ENCODE measurements at regions of chr12 and their contacts with region 1.

Region 1: GRCh38 chr12:118372541-118373495 is at the start of gene TAOK3:
- DNase-seq: peak; percentile 91
- ATAC-seq: peak; percentile 85
- H3K4me3 ChIP-seq: peak within 1 kb of the TSS; percentile 92
- H3K27ac ChIP-seq: peak within 1 kb of the TSS; percentile 76
- H3K4me1 ChIP-seq: peaks cover 3% of the 10 kb centered on the region; the same call in 1 of the 2 replicates
- H3K27me3 ChIP-seq: no peaks in the 10 kb centered on the region
- CTCF ChIP-seq: no peak
- EP300 ChIP-seq: no peak
- POLR2A ChIP-seq: peak; percentile 96
- RAD21 ChIP-seq: no peak
- polyA plus RNA-seq, gene TAOK3: 41.3 to 42.5 TPM

Region 2: DNA sequence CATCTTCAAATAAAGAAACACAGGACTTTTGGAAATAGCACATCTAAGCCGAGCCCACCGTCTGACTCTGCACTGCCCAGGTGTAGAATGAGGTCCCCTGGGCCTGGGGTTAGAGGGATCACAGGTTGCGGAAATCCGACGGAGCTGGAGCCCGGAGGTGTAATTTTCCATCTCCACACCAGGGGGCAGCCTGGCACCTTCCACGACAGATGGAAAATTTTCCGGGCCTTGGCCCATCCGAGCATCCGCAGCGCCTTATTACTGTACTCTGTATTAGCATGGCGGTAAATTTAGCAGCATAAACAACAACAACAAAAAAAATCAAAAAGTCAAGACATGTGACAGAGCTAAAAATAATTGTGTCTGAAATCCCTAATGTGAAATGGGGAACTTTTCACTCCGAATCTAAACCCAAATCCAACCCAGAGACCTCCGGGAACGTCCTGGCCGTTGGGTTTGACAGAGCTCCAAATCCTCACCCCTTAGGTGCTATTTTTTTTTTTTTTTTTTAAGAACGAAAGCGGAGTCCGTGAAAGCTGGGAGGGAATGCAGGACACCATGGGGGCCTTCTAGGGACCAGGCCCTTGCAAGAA is 497.9 kb before region 1 on chr12:
- CTCF ChIA-PET with region 1: interaction called, 18 read pairs
- POLR2A ChIA-PET with region 1: no interaction called
- RAD21 ChIA-PET with region 1: interaction called, 6 read pairs
- SMC1A ChIA-PET with region 1: interaction called, 7 read pairs
- in situ Hi-C with region 1: no loop called
- intact Hi-C with region 1: loop called (anchors 2 kb)
- DNase-seq: no peak
- ATAC-seq: peak; percentile 90
- H3K4me3 ChIP-seq: no peak overlapping the region
- H3K27ac ChIP-seq: no peak overlapping the region
- H3K4me1 ChIP-seq: no peaks in the 10 kb centered on the region
- H3K27me3 ChIP-seq: no peaks in the 10 kb centered on the region
- CTCF ChIP-seq: peak; percentile 85 to 89 (median 86)
- EP300 ChIP-seq: no peak
- POLR2A ChIP-seq: no peak
- RAD21 ChIP-seq: peak; percentile 89

Region 3: DNA sequence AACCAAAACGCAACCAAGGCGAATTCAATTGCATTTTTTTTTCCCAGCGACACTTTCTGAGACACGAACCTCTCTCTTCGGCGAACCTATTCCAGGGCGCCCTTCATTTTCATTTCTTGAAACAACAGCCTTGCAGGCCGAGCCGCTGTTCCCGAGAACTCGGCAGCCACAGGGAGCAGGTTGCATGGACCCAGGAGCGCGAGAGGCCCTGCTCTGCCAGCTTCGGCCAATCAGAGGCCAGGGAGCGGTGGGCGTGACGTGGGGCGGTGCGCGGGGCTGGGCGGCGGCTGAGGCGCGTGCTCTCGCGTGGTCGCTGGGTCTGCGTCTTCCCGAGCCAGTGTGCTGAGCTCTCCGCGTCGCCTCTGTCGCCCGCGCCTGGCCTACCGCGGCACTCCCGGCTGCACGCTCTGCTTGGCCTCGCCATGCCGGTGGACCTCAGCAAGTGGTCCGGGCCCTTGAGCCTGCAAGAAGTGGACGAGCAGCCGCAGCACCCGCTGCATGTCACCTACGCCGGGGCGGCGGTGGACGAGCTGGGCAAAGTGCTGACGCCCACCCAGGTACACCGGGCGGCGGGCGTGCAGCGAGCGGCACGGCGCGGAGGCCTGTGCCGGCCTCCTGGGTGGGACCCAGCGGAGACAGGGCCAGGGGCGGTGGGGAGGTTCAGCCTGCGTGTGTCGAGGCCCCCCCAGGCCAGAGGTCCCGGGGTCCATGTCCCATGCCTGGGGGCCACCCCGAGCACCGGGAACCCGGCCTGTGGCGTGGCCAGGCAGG is 236.8 kb before region 1 on chr12 and contains the start of gene PEBP1:
- CTCF ChIA-PET with region 1: interaction called, 28 read pairs
- POLR2A ChIA-PET with region 1: interaction called, 4 read pairs
- RAD21 ChIA-PET with region 1: interaction called, 32 read pairs
- SMC1A ChIA-PET with region 1: interaction called, 15 read pairs
- in situ Hi-C with region 1: no loop called
- intact Hi-C with region 1: no loop called
- DNase-seq: peak; percentile 77
- ATAC-seq: peak; percentile 98
- H3K4me3 ChIP-seq: peak within 1 kb of the TSS; percentile 86
- H3K27ac ChIP-seq: peak within 1 kb of the TSS; percentile 86
- H3K4me1 ChIP-seq: peaks cover 11% of the 10 kb centered on the region
- H3K27me3 ChIP-seq: no peaks in the 10 kb centered on the region
- CTCF ChIP-seq: no peak
- EP300 ChIP-seq: no peak
- POLR2A ChIP-seq: peak; percentile 97
- RAD21 ChIP-seq: no peak
- polyA plus RNA-seq, gene PEBP1: 79.4 to 150 TPM

Region 4: GRCh38 chr12:118187751-118188435 is 184.9 kb before region 1 on chr12:
- CTCF ChIA-PET with region 1: interaction called, 277 read pairs
- POLR2A ChIA-PET with region 1: interaction called, 23 read pairs
- RAD21 ChIA-PET with region 1: interaction called, 166 read pairs
- SMC1A ChIA-PET with region 1: interaction called, 185 read pairs
- in situ Hi-C with region 1: loop called (anchors 5 kb)
- intact Hi-C with region 1: no loop called
- DNase-seq: no peak
- ATAC-seq: no peak
- H3K4me3 ChIP-seq: no peak overlapping the region
- H3K27ac ChIP-seq: no peak overlapping the region
- H3K4me1 ChIP-seq: peaks cover 23% of the 10 kb centered on the region
- H3K27me3 ChIP-seq: no peaks in the 10 kb centered on the region
- CTCF ChIP-seq: no peak
- EP300 ChIP-seq: no peak
- POLR2A ChIP-seq: no peak
- RAD21 ChIP-seq: no peak

Region 5: GRCh38 chr12:118237052-118237665 is 135.7 kb before region 1 on chr12:
- CTCF ChIA-PET with region 1: interaction called, 17 read pairs
- POLR2A ChIA-PET with region 1: interaction called, 4 read pairs
- RAD21 ChIA-PET with region 1: interaction called, 15 read pairs
- SMC1A ChIA-PET with region 1: interaction called, 14 read pairs
- in situ Hi-C with region 1: no loop called
- intact Hi-C with region 1: loop called (anchors 5 kb)
- DNase-seq: peak; percentile 65
- ATAC-seq: peak; percentile 93
- H3K4me3 ChIP-seq: no peak overlapping the region
- H3K27ac ChIP-seq: peak overlapping the region; percentile 75
- H3K4me1 ChIP-seq: peaks cover 26% of the 10 kb centered on the region
- H3K27me3 ChIP-seq: no peaks in the 10 kb centered on the region
- CTCF ChIP-seq: no peak
- EP300 ChIP-seq: peak; percentile 27 to 76; a peak in 1 of 4 replicates
- POLR2A ChIP-seq: no peak
- RAD21 ChIP-seq: no peak

Region 6: GRCh38 chr12:118307069-118307954 is 65.5 kb before region 1 on chr12:
- CTCF ChIA-PET with region 1: interaction called, 24 read pairs
- POLR2A ChIA-PET with region 1: interaction called, 5 read pairs
- RAD21 ChIA-PET with region 1: interaction called, 23 read pairs
- SMC1A ChIA-PET with region 1: interaction called, 23 read pairs
- in situ Hi-C with region 1: no loop called
- intact Hi-C with region 1: loop called (anchors 2 kb)
- DNase-seq: peak; percentile 69
- ATAC-seq: peak; percentile 78
- H3K4me3 ChIP-seq: peak overlapping the region; percentile 64
- H3K27ac ChIP-seq: peak overlapping the region; percentile 98
- H3K4me1 ChIP-seq: peaks cover 38% of the 10 kb centered on the region
- H3K27me3 ChIP-seq: no peaks in the 10 kb centered on the region
- CTCF ChIP-seq: no peak
- EP300 ChIP-seq: no peak; a peak in 1 of 4 replicates
- POLR2A ChIP-seq: no peak
- RAD21 ChIP-seq: no peak

Region 7: GRCh38 chr12:118357257-118358007 is 15.4 kb before region 1 on chr12:
- CTCF ChIA-PET with region 1: interaction called, 74 read pairs
- POLR2A ChIA-PET with region 1: interaction called, 17 read pairs
- RAD21 ChIA-PET with region 1: interaction called, 71 read pairs
- SMC1A ChIA-PET with region 1: interaction called, 103 read pairs
- in situ Hi-C with region 1: no loop called
- intact Hi-C with region 1: no loop called
- DNase-seq: peak; percentile 62
- ATAC-seq: peak; percentile 80
- H3K4me3 ChIP-seq: peak overlapping the region; percentile 67
- H3K27ac ChIP-seq: peak overlapping the region; percentile 89
- H3K4me1 ChIP-seq: peaks cover 6% of the 10 kb centered on the region; the same call in 1 of the 2 replicates
- H3K27me3 ChIP-seq: no peaks in the 10 kb centered on the region
- CTCF ChIP-seq: peak in 2 of 3 experiments; percentile 34 to 40; a peak in 2 of 6 replicates
- EP300 ChIP-seq: no peak
- POLR2A ChIP-seq: no peak
- RAD21 ChIP-seq: no peak

Measured in GM12878 (cell line).